ENCODE measurements at regions of chr17 and their contacts with region 1.

Region 1: DNA sequence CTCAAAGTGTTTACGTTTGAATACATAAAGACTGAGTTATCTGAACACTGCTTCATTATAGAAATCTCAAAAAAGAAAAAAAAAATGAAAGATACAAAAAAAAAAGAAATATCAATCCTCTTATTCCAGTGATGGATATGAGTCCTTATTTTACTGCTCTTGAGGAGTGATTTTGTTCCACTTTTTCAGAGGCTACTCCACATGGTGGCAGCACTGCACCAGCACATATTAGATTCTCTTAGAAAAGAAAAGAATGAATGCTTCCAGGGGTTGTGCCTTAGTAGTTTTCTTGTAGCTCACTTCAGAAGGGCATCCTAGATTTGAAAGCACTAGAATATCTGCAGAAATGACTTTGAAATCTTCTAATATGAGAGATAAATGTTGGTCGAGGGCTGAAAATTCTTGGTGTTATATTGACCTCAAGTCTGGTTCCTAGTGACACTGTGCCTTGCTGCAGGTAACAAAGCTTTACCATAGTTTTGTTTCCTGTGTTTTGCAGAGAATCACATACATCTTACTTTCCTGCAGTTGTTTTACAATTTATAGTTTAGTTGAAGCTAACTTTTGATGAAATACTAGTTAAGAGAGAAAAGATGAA is 25.9 kb downstream of the AP2B1 start:
- DNase-seq: peak; percentile 4
- H3K4me3 ChIP-seq: no peak overlapping the region
- CTCF ChIP-seq: peak; percentile 53

Region 2: GRCh38 chr17:35596530-35597233 is 16.3 kb before region 1 on chr17:
- CTCF ChIA-PET with region 1: interaction called, 62 read pairs
- POLR2A ChIA-PET with region 1: no interaction called
- DNase-seq: no peak
- H3K4me3 ChIP-seq: no peak overlapping the region
- CTCF ChIP-seq: no peak

Region 3: GRCh38 chr17:35645923-35646322 is 32.9 kb after region 1 on chr17:
- CTCF ChIA-PET with region 1: interaction called, 11 read pairs
- POLR2A ChIA-PET with region 1: no interaction called
- DNase-seq: peak; percentile 14
- H3K4me3 ChIP-seq: no peak overlapping the region
- CTCF ChIP-seq: no peak

Region 4: GRCh38 chr17:35726127-35726952 is 113.3 kb after region 1 on chr17:
- CTCF ChIA-PET with region 1: interaction called, 43 read pairs
- POLR2A ChIA-PET with region 1: no interaction called
- DNase-seq: peak; percentile 85
- H3K4me3 ChIP-seq: no peak overlapping the region
- CTCF ChIP-seq: no peak

Region 5: DNA sequence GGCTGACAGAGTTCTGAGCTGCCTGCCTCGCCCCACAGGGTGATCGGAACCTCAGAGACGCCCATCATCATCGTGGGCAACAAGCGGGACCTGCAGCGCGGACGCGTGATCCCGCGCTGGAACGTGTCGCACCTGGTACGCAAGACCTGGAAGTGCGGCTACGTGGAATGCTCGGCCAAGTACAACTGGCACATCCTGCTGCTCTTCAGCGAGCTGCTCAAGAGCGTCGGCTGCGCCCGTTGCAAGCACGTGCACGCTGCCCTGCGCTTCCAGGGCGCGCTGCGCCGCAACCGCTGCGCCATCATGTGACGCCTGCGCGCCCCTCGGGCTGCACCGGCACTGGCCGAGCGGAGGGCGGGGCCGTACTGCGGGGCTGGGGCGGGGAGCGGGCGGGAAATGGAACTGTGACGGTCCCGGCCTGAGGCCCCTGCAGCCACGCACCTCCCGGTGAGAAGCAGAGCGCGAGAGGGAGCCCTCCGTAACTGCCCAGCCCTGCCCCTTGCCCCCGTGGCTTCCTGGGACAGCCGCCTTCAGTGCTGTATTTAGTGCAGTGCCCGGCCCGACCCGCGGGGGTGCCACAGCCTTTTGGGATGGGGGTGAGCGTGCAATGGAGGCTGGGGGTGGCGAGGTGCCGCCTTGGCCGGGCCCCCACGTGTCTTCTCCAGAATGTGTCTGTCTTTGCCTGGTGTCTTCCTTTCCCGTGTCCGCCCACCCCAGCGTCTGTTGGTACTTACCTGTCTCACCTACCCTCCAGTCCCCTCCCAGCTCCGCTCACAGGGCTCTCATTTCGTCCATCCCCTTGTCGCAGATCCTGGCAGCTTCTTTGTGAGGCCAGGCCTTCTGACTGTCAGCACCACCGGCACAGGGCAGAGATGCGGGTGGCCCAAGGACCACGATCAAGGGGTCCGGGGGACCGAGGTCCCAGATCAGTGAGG is 128.2 kb after region 1 on chr17:
- CTCF ChIA-PET with region 1: interaction called, 565 read pairs
- POLR2A ChIA-PET with region 1: interaction called, 4 read pairs
- DNase-seq: no peak
- H3K4me3 ChIP-seq: peak overlapping the region; percentile 1; the same call in 1 of the 2 replicates
- CTCF ChIP-seq: no peak

Region 6: DNA sequence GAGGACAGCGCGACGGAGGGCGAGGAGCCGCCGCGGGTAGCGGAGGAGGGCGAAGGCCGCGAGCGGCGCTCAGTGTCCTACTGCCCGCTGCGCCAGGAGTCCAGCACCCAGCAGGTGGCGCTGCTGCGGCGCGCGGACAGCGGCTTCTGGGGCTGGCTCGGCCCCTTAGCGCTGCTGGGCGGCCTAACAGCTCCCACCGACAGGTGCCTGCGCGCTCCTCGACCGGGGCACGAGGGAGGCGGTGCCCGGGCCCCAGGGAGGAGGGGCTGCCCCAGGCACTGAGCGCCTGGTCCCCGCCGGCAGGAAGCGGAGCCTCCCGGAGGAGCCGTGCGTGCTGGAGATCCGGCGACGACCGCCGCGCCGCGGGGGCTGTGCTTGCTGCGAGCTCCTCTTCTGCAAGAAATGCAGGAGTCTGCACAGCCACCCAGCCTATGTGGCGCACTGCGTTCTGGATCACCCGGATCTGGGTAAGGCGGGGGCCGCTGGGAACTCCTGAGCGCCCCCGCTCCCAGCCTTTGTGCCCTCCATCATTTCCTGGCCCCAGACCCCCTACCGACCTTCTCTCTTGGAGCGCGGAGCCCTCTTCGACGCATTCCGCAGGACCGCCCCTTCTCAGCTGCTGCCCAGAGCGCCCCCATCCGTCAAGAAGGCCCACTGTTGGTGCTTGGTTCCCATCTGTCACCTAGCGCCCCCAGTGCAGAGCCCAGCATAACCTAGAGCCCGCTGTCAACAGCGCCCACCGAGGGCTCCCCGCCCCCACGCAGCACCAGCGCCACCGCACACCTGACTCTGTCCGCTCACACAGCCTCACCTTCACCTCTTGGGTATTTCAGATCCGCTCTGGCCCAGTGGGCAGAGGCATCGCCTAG is 151.3 kb after region 1 on chr17:
- CTCF ChIA-PET with region 1: interaction called, 33 read pairs
- POLR2A ChIA-PET with region 1: no interaction called
- DNase-seq: no peak
- H3K4me3 ChIP-seq: peak overlapping the region; percentile 46
- CTCF ChIP-seq: peak; percentile 98

Measured in AG04449 (cell line).